B cell (primary cell): ENCODE measurements at regions of chr17 and their contacts with region 1.

Region 1: DNA sequence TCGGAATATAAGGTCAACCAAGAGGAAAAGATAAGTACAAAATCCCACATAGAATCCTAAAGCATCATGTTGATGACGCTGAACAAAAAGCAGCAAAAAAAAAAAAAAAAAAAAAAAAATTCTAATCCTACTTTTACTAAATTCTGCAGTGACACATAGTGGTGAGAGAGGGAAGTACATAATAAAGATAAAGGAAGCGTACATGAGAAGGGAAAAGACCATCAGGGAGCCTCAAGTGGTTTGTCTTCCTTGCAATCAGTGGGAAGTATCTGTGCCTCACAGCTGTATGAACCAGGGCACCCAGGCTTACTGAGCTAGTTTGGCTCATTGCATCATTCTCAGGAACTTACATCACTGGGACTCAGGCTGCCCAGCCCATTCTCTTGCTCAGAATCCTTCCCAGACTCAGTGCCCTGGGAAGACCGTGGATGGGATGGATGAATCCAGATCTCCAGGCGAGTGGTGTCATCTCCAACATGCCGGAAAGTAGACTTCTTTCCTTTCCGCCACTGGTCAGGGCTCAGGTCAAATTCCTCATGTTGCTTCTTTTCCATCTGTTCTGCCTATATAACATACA is 21.2 kb downstream of the SMG6 start:
- DNase-seq: peak; percentile 71
- ATAC-seq: peak; percentile 41
- H3K4me3 ChIP-seq: no peak overlapping the region
- H3K4me3 Mint-ChIP-seq: no peak overlapping the region
- H3K27ac ChIP-seq: no peak overlapping the region
- H3K27ac Mint-ChIP-seq: peak overlapping the region; percentile 46
- H3K4me1 ChIP-seq: no peaks in the 10 kb centered on the region
- H3K4me1 Mint-ChIP-seq: no peaks in the 10 kb centered on the region
- H3K27me3 ChIP-seq: no peaks in the 10 kb centered on the region
- H3K27me3 Mint-ChIP-seq: no peaks in the 10 kb centered on the region
- CTCF ChIP-seq: peak; percentile 79

Region 2: GRCh38 chr17:1882836-1883235 is 399.5 kb before region 1 on chr17:
- CTCF ChIA-PET with region 1: interaction called, 12 read pairs
- POLR2A ChIA-PET with region 1: no interaction called
- intact Hi-C with region 1: loop called (anchors 10 kb)
- DNase-seq: peak; percentile 55
- ATAC-seq: peak; percentile 53
- H3K4me3 ChIP-seq: no peak overlapping the region
- H3K4me3 Mint-ChIP-seq: no peak overlapping the region
- H3K27ac ChIP-seq: no peak overlapping the region
- H3K27ac Mint-ChIP-seq: no peak overlapping the region
- H3K4me1 ChIP-seq: no peaks in the 10 kb centered on the region
- H3K4me1 Mint-ChIP-seq: no peaks in the 10 kb centered on the region
- H3K27me3 ChIP-seq: no peaks in the 10 kb centered on the region
- H3K27me3 Mint-ChIP-seq: no peaks in the 10 kb centered on the region
- CTCF ChIP-seq: peak; percentile 60

Region 3: GRCh38 chr17:2215616-2216364 is 66.6 kb before region 1 on chr17:
- CTCF ChIA-PET with region 1: no interaction called
- POLR2A ChIA-PET with region 1: no interaction called
- intact Hi-C with region 1: no loop called
- DNase-seq: peak; percentile 79
- ATAC-seq: peak; percentile 98
- H3K4me3 ChIP-seq: peak overlapping the region in 4 of 5 experiments; percentile 11 to 58 (median 38)
- H3K4me3 Mint-ChIP-seq: peak overlapping the region; percentile 80
- H3K27ac ChIP-seq: peak overlapping the region; percentile 64 to 91
- H3K27ac Mint-ChIP-seq: peak overlapping the region; percentile 78
- H3K4me1 ChIP-seq: peaks cover 20 to 26% of the 10 kb centered on the region in 2 donors
- H3K4me1 Mint-ChIP-seq: peaks cover 31% of the 10 kb centered on the region
- H3K27me3 ChIP-seq: no peaks in the 10 kb centered on the region
- H3K27me3 Mint-ChIP-seq: no peaks in the 10 kb centered on the region
- CTCF ChIP-seq: no peak

Region 4: GRCh38 chr17:2266045-2266864 is 16.1 kb before region 1 on chr17:
- CTCF ChIA-PET with region 1: interaction called, 10 read pairs
- POLR2A ChIA-PET with region 1: no interaction called
- intact Hi-C with region 1: no loop called
- DNase-seq: peak; percentile 69
- ATAC-seq: peak; percentile 83
- H3K4me3 ChIP-seq: peak overlapping the region in 2 of 5 experiments; percentile 26 to 27
- H3K4me3 Mint-ChIP-seq: peak overlapping the region; percentile 80
- H3K27ac ChIP-seq: peak overlapping the region; percentile 78 to 90
- H3K27ac Mint-ChIP-seq: peak overlapping the region; percentile 90
- H3K4me1 ChIP-seq: peaks cover 15 to 22% of the 10 kb centered on the region in 2 donors
- H3K4me1 Mint-ChIP-seq: peaks cover 17% of the 10 kb centered on the region
- H3K27me3 ChIP-seq: no peaks in the 10 kb centered on the region
- H3K27me3 Mint-ChIP-seq: no peaks in the 10 kb centered on the region
- CTCF ChIP-seq: no peak

Region 5: GRCh38 chr17:2386400-2387085 is 104.2 kb after region 1 on chr17:
- CTCF ChIA-PET with region 1: no interaction called
- POLR2A ChIA-PET with region 1: no interaction called
- intact Hi-C with region 1: no loop called
- DNase-seq: no peak
- ATAC-seq: no peak
- H3K4me3 ChIP-seq: no peak overlapping the region
- H3K4me3 Mint-ChIP-seq: no peak overlapping the region
- H3K27ac ChIP-seq: no peak overlapping the region
- H3K27ac Mint-ChIP-seq: no peak overlapping the region
- H3K4me1 ChIP-seq: peaks cover 14 to 21% of the 10 kb centered on the region in 2 donors
- H3K4me1 Mint-ChIP-seq: peaks cover 18% of the 10 kb centered on the region
- H3K27me3 ChIP-seq: no peaks in the 10 kb centered on the region
- H3K27me3 Mint-ChIP-seq: no peaks in the 10 kb centered on the region
- CTCF ChIP-seq: no peak